ENCODE measurements at regions of chr6 and their contacts with region 1.

Region 1: GRCh38 chr6:56851541-56852259 is 103.2 kb upstream of the BEND6 start:
- DNase-seq: peak; percentile 51
- H3K4me3 ChIP-seq: peak overlapping the region; percentile 40
- H3K27me3 ChIP-seq: no peaks in the 10 kb centered on the region
- CTCF ChIP-seq: peak; percentile 63

Region 2: GRCh38 chr6:56637640-56638039 is 214.1 kb before region 1 on chr6:
- CTCF ChIA-PET with region 1: interaction called, 27 read pairs
- POLR2A ChIA-PET with region 1: interaction called, 4 read pairs
- DNase-seq: no peak
- H3K4me3 ChIP-seq: no peak overlapping the region
- H3K27me3 ChIP-seq: no peaks in the 10 kb centered on the region
- CTCF ChIP-seq: peak; percentile 54

Region 3: GRCh38 chr6:56693246-56693607 is 158.5 kb before region 1 on chr6:
- CTCF ChIA-PET with region 1: interaction called, 10 read pairs
- POLR2A ChIA-PET with region 1: interaction called, 5 read pairs
- DNase-seq: peak; percentile 89
- H3K4me3 ChIP-seq: peak overlapping the region; percentile 28
- H3K27me3 ChIP-seq: no peaks in the 10 kb centered on the region
- CTCF ChIP-seq: no peak

Region 4: GRCh38 chr6:56699066-56699654 is 152.5 kb before region 1 on chr6:
- CTCF ChIA-PET with region 1: interaction called, 10 read pairs
- POLR2A ChIA-PET with region 1: no interaction called
- DNase-seq: no peak
- H3K4me3 ChIP-seq: no peak overlapping the region
- H3K27me3 ChIP-seq: no peaks in the 10 kb centered on the region
- CTCF ChIP-seq: peak; percentile 39; the same call in 1 of the 2 replicates

Region 5: DNA sequence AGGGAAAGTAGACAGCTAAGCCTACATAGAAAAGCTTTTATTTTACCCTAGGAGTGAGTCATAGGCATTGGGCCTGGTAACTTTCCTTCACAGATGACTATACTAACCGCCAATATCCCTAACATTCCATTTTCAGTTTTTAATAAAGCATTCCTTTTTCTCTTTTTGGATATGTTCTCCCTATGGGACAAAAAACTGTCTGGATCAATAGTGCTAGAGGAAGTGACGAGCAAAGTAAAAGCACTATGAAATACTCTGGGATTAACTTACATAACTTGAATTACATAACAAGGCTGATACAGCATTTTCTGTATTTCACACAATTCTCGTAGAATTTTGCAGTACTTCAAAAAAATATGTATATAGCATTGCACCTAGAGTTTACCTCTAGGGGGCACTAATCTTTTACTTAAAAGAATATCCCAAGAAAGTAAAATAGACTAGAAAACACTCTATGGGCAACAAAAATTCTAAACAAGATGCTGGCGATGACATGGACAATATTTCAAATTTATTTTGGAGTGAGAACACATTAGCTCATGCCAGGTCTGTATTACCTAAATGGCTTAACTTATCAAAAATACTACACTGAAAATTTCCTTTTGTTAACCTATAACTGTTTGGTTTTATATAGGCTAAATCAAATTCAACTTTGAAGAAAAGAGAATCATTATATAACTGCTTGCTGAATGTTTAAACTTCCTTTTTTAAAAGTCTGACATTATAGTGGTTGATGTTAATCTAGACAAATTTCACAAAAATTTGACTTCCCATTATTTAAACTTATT is 142.7 kb before region 1 on chr6:
- CTCF ChIA-PET with region 1: interaction called, 61 read pairs
- POLR2A ChIA-PET with region 1: no interaction called
- DNase-seq: no peak
- H3K4me3 ChIP-seq: no peak overlapping the region
- H3K27me3 ChIP-seq: no peaks in the 10 kb centered on the region
- CTCF ChIP-seq: peak; percentile 42

Region 6: DNA sequence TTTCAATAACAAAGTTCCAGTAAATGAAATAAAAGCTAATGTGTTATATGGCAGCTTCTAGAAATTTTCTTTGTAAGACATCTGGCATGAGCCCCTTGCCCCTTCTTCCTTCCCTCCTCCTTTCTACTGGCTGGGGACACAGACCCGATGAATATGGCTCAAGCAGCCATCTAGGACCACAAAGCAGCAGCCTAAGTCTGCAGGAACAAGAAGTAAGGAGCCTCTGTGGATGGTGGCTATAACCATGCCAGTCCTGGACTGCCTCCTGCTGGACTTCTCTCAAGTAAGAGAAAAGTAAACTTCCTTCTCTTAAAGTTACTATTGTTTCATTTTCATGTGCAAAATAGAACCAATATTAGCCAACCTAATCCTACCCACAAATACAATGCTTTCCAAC is 94.1 kb before region 1 on chr6:
- CTCF ChIA-PET with region 1: interaction called, 21 read pairs
- POLR2A ChIA-PET with region 1: no interaction called
- DNase-seq: no peak
- H3K4me3 ChIP-seq: no peak overlapping the region
- H3K27me3 ChIP-seq: no peaks in the 10 kb centered on the region
- CTCF ChIP-seq: peak; percentile 43; the same call in 1 of the 2 replicates

Region 7: DNA sequence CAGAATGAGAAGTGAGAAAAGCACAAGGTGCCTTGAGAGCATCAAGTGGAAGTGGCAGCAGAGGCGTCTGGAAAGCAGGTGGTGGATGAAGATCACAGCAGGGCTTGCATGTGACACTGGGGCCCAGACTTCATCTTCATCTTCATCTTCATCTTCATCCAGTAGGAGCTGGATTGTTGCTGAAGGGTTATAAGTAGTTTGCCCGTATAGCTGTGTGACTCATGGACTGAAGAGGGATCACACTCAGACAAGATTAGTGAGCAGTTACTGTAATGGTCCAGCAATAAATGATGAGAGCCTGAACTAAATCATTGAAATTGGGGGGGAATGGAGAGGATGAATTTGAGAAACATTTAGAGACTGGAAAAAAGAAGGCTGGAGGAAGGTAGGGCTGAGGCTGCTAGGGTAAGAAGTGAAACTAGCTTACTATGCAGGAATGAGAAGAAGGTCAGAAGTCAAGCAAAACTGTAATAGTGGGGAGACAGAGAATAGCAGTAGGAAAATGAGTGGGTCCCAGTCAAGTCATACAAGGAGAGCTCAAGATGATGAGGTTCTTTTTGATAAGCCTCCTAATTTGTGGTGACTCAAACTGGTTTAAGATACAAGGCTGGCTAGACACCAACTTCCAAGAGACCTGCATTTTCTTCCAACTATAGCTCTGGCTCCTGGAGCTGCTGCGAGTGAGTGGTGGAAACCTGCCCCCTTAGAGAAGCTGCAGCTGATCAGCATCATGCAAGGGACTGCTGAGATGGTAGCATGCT is 10.9 kb after region 1 on chr6:
- CTCF ChIA-PET with region 1: interaction called, 49 read pairs
- POLR2A ChIA-PET with region 1: interaction called, 3 read pairs
- DNase-seq: no peak
- H3K4me3 ChIP-seq: no peak overlapping the region
- H3K27me3 ChIP-seq: no peaks in the 10 kb centered on the region
- CTCF ChIP-seq: no peak

Measured in BJ (cell line).